Common myeloid progenitor, CD34-positive (primary cell): ENCODE measurements at regions of chr2 and their contacts with region 1.

Region 1: DNA sequence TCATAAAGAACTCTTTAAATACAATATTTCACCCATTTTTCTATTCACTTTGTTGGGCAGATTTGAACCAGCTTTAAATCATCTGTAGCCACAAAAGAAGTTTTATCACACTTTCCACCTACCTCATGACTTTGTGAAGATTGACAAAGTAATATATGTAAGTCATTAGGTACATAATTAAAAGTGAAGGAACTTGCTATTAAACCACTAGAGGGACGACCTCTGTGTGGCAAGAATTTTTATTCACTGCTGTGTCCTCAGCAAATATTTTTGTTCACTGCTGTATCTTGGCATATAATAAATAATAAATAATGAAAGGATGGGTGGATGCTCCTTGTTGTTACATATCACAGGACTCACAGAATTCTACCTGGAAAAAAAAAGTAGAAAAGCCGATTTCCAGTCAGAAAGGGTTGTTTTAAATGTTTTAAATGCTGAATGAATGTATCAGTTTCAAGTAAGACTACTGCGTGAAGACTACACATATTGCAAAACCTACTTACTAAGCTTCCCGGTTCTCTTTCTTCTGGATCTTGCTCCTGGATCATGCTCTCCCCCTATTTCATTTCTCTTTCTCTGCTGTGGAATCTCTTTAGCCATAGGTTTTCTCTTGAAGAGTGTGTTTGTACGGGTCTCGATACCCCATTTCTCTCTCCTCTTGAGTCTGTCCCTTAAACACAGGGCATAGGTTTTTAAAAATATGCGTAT is 44.8 kb downstream of the KCMF1 start:
- DNase-seq: peak in 2 of 3 donors; percentile 53 to 56
- H3K4me3 ChIP-seq: peak overlapping the region in 2 of 7 experiments; percentile 4 to 33
- H3K27ac ChIP-seq: peak overlapping the region in 1 of 2 experiments; percentile 51
- H3K4me1 ChIP-seq: peaks cover 12 to 53% (median 42%) of the 10 kb centered on the region in 4 experiments
- H3K27me3 ChIP-seq: no peaks in the 10 kb centered on the region

Region 2: GRCh38 chr2:84946204-84947009 is 69.4 kb before region 1 on chr2:
- CTCF ChIA-PET with region 1: interaction called, 12 read pairs
- POLR2A ChIA-PET with region 1: no interaction called
- DNase-seq: peak; percentile 59 to 89 (median 82)
- H3K4me3 ChIP-seq: peak overlapping the region in 4 of 7 experiments; percentile 2 to 60 (median 29)
- H3K27ac ChIP-seq: peak overlapping the region; percentile 51 to 69
- H3K4me1 ChIP-seq: peaks cover 6 to 25% (median 21%) of the 10 kb centered on the region in 4 experiments
- H3K27me3 ChIP-seq: no peaks in the 10 kb centered on the region

Region 3: DNA sequence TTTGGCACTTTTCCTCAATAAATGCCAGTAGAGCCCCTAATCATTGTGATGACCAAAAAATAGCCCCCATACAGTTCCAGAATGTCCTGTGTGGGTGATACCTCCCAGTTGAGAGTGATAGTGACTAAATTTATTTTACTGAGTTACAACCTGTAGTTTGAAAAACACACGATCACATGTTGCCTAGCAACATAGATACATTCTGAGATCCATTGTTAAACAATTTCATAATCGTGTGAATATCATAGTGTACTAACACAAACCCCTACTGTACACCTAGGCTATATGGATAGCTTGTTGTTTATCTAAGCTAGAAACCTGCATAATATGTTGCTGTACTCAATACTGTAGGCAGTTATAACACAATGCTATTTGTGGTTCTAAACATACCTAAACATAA is 14.2 kb before region 1 on chr2:
- CTCF ChIA-PET with region 1: interaction called, 18 read pairs
- POLR2A ChIA-PET with region 1: interaction called, 4 read pairs
- DNase-seq: peak in 1 of 3 donors; percentile 45
- H3K4me3 ChIP-seq: no peak overlapping the region
- H3K27ac ChIP-seq: no peak overlapping the region
- H3K4me1 ChIP-seq: peaks cover 2 to 9% (median 5%) of the 10 kb centered on the region in 4 experiments
- H3K27me3 ChIP-seq: no peaks in the 10 kb centered on the region